ENCODE measurements at regions of chr4 and their contacts with region 1.

Region 1: DNA sequence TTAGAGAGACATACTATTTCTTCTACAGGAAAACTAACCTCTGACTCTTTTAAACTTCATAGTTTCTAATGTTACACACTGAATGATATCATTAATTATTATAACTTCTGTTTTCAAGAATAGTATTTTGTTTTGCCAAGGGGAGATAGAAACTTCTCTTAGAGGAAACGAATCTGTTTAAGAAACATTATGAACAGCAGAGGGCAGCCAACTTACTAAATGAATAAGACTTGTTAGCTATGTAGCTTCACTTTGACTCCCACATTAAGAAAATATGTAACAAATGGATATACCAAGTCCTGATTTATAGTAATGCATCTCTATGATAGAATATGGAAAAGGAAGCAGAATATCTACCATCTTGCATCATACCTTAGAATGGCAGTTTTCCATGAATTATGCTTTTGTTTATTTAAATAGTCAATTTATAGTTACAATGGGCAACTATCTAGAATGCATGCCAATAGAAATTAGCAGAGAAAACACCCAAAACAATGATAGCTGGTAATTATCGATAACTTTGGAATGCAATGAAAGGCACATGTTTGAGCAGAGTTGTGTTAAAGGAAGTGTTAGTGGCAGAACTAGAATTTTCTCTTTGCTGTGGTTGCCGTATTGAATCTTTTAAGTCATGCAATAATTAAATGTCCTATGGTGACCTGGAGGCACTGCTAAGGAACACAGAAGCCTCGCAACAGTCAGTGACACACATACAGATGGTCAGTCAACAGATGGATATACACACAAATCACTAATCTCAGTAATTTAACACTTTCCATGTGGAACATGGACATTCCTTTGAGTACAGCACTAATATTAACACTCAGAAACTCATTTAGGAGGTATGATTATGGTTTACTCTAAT is 105.7 kb upstream of the PDLIM3 start:
- DNase-seq: no peak
- H3K4me3 ChIP-seq: no peak overlapping the region
- H3K27ac ChIP-seq: peak overlapping the region; percentile 3 to 52 (median 18)
- H3K4me1 ChIP-seq: peaks cover 0 to 8% (median 0%) of the 10 kb centered on the region in 4 donors
- H3K27me3 ChIP-seq: no peaks in the 10 kb centered on the region
- CTCF ChIP-seq: peak; percentile 31 to 53 (median 40)
- EP300 ChIP-seq: no peak
- POLR2A ChIP-seq: no peak

Region 2: GRCh38 chr4:185817403-185817818 is 176.4 kb after region 1 on chr4:
- in situ Hi-C with region 1: no loop called
- intact Hi-C with region 1: no loop called
- DNase-seq: peak; percentile 61
- H3K4me3 ChIP-seq: no peak overlapping the region
- H3K27ac ChIP-seq: peak overlapping the region in 2 of 4 donors; percentile 15 to 41
- H3K4me1 ChIP-seq: peaks cover 0 to 13% (median 8%) of the 10 kb centered on the region in 4 donors
- H3K27me3 ChIP-seq: no peaks in the 10 kb centered on the region
- CTCF ChIP-seq: no peak
- EP300 ChIP-seq: no peak
- POLR2A ChIP-seq: no peak

Region 3: DNA sequence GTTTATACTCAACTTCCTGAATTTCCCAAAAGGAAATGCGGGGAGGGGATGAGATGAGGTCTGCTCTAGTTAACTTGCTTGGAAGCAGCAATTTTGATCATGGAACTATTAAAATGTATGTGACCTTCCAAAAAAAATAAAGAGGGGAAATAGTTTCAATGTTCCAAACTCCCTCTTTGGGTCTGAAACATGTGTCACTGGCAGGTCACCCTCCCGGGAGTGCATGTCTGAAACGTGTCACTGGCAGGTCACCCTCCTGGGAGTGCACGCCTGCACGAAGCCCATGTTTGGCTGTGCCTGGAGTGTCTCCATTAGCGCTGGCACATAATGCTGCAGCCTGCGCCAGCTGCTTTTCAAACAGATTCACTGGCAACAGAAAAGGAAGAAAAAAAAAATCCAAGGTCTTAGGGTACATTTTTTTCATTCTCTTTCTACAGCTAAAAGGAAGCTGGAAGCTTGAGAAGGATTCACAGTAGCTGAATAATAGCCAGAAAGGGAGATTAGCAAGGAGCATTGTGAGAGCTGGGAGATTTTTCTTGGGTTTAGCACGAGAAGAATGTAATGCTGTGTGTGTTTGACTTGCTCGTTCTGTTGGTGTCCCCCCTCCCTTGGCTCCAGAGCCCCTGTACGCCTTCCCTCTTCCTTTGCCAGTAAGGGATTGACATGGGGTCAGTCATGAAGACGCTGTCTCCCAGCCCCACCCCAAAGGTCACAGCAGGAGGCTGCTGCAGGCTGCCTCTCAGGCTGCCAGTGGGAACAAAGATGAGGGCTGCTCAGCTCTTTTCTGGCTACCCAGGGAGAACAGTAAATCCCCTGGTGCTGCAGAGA is 388.7 kb after region 1 on chr4:
- in situ Hi-C with region 1: loop called (anchors 5 to 25 kb)
- intact Hi-C with region 1: loop called (anchors 5 kb)
- DNase-seq: peak; percentile 38
- H3K4me3 ChIP-seq: peak overlapping the region in 1 of 4 donors; percentile 8
- H3K27ac ChIP-seq: peak overlapping the region; percentile 68 to 87 (median 82)
- H3K4me1 ChIP-seq: peaks cover 0 to 23% (median 15%) of the 10 kb centered on the region in 4 donors
- H3K27me3 ChIP-seq: no peaks in the 10 kb centered on the region
- CTCF ChIP-seq: no peak
- EP300 ChIP-seq: no peak
- POLR2A ChIP-seq: no peak

Region 4: GRCh38 chr4:186037692-186038658 is 396.9 kb after region 1 on chr4:
- in situ Hi-C with region 1: loop called in 1 of 4 experiments (anchors 25 kb)
- intact Hi-C with region 1: no loop called
- DNase-seq: peak; percentile 39
- H3K4me3 ChIP-seq: no peak overlapping the region
- H3K27ac ChIP-seq: peak overlapping the region in 2 of 4 donors; percentile 60 to 73
- H3K4me1 ChIP-seq: peaks cover 0 to 21% (median 0%) of the 10 kb centered on the region in 4 donors
- H3K27me3 ChIP-seq: peaks cover 3% of the 10 kb centered on the region
- CTCF ChIP-seq: peak; percentile 77 to 89 (median 78)
- EP300 ChIP-seq: no peak
- POLR2A ChIP-seq: no peak

Region 5: DNA sequence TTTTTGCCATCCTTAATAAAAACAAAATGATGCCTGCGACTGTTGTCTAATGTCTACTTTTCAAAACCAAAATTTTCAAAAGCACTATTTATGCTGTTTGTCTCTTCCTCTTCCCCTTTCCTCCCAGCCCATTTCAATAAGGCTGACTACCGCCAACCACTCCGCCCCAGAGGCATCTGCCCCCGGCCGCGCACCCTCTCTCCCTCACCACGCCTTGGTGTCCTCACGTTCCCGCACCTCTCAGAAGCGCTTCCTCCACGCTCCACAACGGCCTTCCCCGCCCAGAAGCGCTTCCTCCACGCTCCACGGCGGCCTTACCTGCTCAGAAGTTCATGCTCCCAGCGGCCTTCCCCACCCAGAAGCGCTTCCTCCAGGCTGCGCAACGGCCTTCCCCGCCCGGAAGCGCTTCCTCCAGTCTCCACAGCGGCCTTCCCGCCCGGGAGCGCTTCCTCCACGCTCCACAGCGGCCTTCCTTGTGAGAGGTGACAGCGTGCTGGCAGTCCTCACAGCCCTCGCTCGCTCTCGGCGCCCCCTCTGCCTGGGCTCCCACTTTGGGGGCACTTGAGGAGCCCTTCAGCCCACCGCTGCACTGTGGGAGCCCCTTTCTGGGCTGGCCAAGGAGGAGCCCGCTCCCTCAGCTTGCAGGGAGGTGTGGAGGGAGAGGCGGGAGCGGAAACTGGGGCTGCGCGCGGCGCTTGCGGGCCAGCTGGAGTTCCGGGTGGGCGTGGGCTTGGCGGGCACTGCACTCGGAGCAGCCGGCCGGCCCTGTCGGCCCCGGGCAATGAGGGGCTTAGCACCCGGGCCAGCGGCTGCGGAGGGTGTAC is 1864.1 kb after region 1 on chr4:
- in situ Hi-C with region 1: no loop called
- intact Hi-C with region 1: no loop called
- DNase-seq: no peak
- H3K4me3 ChIP-seq: no peak overlapping the region
- H3K27ac ChIP-seq: no peak overlapping the region
- H3K4me1 ChIP-seq: no peaks in the 10 kb centered on the region
- H3K27me3 ChIP-seq: no peaks in the 10 kb centered on the region
- CTCF ChIP-seq: no peak
- EP300 ChIP-seq: no peak
- POLR2A ChIP-seq: no peak

Measured in transverse colon (tissue), 4 donors.